ENCODE measurements at regions of chr11 and their contacts with region 1.

Region 1: GRCh38 chr11:112795142-112795815 is 165.9 kb upstream of the NCAM1 start:
- DNase-seq: peak in 5 of 10 donors; percentile 59 to 70 (median 67)
- H3K4me3 ChIP-seq: peak overlapping the region in 1 of 59 donors; percentile 6
- H3K27ac ChIP-seq: peak overlapping the region in 26 of 59 donors; percentile 3 to 83 (median 72)
- H3K27me3 ChIP-seq: no peaks in the 10 kb centered on the region
- CTCF ChIP-seq: peak; percentile 21 to 78 (median 54)

Region 2: GRCh38 chr11:112837162-112837826 is 42.0 kb after region 1 on chr11:
- intact Hi-C with region 1: loop called in 1 of 2 experiments (anchors 5 kb)
- DNase-seq: peak in 8 of 10 donors; percentile 42 to 80 (median 66)
- H3K4me3 ChIP-seq: no peak overlapping the region
- H3K27ac ChIP-seq: peak overlapping the region in 15 of 59 donors; percentile 0 to 55 (median 33)
- H3K27me3 ChIP-seq: no peaks in the 10 kb centered on the region
- CTCF ChIP-seq: peak in 54 of 56 donors; percentile 25 to 80 (median 58)

Region 3: GRCh38 chr11:112902361-112903011 is 107.2 kb after region 1 on chr11:
- intact Hi-C with region 1: loop called in 1 of 2 experiments (anchors 2 kb)
- DNase-seq: no peak
- H3K4me3 ChIP-seq: peak overlapping the region in 7 of 59 donors; percentile 2 to 35 (median 12)
- H3K27ac ChIP-seq: peak overlapping the region; percentile 73 to 99 (median 93)
- H3K27me3 ChIP-seq: no peaks in the 10 kb centered on the region
- CTCF ChIP-seq: no peak

Region 4: DNA sequence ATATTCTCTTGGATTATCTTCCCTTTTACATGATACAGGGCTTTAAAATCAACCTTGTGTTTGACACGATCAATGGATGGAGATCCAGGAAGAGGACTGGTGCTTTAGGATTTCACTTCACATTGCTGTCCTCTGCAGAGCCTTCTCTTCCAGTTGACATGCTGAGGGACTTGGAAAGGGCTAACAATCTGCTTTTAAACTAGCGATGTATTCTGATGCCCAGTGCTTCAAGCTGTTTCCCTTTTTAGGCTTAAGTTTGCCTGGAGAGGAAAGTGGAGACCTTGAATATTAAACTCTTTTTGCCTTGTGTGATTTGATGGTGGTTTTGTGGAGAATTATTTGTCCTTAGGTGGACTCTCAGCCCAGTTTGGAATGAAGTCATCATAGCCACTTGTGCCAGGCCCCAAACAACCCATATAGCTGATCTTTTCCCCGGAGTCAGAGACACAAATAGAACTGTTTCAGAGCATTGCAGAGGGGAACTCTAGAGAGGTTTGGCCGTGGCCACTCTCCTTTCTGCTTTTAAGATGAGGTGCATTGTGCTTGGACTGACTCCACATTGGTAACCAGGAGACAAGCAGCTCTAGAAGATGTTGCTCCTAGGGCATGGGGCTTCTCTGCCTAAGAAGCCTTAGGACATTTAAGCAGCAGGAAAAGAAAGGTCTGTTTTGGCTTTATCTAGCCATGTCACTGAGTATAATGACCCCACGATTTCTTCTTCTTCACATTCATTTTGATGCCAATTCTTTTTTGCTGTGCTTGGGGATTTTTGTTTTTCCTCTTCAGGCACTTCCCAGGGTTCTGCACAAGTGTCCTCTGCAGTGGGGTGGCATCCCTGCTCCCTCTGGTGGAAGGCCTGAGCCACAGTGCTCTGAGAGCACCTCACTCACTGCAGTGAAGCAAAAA is 318.8 kb after region 1 on chr11:
- intact Hi-C with region 1: loop called (anchors 10 kb)
- DNase-seq: peak; percentile 60 to 84 (median 77)
- H3K4me3 ChIP-seq: peak overlapping the region in 4 of 59 donors; percentile 5 to 22 (median 14)
- H3K27ac ChIP-seq: peak overlapping the region in 51 of 59 donors; percentile 14 to 75 (median 57)
- H3K27me3 ChIP-seq: no peaks in the 10 kb centered on the region
- CTCF ChIP-seq: peak; percentile 61 to 94 (median 83)

Region 5: DNA sequence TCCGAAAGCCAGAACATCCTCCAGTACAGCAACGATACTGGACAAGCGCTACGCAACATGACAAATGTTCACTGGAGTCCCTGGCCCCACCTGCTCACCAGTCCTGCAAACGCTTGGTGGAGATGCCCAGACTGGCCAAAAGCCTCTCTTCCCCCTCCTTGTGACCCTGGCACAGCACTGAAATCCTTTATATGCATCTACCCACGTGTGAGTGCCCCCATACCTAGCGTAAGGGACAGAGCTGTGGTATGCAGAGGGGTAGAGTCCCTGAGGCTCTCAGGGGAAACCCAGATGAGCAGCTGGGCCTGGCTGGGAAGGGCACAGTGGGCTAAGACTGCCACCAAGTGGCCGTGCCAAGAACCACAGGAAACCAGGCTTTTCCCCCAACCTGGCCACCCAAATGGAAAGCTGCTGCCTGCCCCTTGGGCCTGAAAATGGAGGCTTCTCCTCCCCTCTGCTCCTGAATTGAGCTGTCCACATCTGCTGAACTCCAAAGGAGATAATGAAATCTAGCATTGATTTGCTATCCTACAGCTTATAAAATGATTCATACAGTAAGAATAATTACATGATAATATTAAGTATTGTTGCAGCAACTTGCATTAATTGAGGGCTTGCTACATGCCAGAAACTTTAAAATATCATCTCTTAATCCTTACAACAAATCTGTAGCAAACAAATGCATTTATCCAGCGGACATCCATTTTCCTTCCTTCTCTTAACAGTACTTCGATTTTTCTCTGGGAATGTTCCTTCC is 494.3 kb after region 1 on chr11:
- intact Hi-C with region 1: loop called (anchors 2 to 10 kb)
- DNase-seq: peak; percentile 64 to 83 (median 66)
- H3K4me3 ChIP-seq: no peak overlapping the region
- H3K27ac ChIP-seq: no peak overlapping the region
- H3K27me3 ChIP-seq: peaks cover 0 to 4% (median 0%) of the 10 kb centered on the region in 45 donors
- CTCF ChIP-seq: peak; percentile 73 to 98 (median 89)

Measured in dorsolateral prefrontal cortex (tissue), 120 donors.